H1 (cell line): ENCODE measurements at regions of chr3 and their contacts with region 1.

Region 1: GRCh38 chr3:155418407-155418806 is 124.9 kb upstream of the STRIT1 start:
- DNase-seq: no peak
- H3K4me3 ChIP-seq: no peak overlapping the region
- H3K27ac ChIP-seq: no peak overlapping the region
- H3K4me1 ChIP-seq: peaks cover 0 to 12% (median 8%) of the 10 kb centered on the region in 4 experiments; a peak in 4 of 7 replicates
- H3K27me3 ChIP-seq: no peaks in the 10 kb centered on the region
- CTCF ChIP-seq: no peak
- EP300 ChIP-seq: no peak
- POLR2A ChIP-seq: no peak
- RAD21 ChIP-seq: no peak

Region 2: DNA sequence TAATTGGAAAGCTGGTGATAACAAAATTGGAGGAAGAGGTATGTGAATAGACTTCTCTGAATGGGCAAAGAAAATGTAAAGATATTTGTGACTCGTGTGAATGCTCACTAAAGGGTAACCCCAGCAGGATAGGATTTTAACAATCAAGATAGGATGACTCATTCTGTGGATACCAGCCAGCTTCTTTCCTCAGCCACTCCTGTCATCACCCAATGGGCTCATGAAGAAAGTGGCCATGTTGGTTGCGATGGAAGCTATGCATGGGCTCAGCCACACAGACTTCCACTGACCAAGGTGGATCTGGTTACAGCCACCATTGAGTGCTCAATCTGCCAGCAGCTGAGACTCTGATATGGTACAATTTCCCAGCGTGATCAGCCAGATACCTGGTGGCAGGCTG is 165.9 kb before region 1 on chr3:
- CTCF ChIA-PET with region 1: no interaction called
- POLR2A ChIA-PET with region 1: no interaction called
- DNase-seq: no peak
- H3K4me3 ChIP-seq: no peak overlapping the region
- H3K27ac ChIP-seq: no peak overlapping the region
- H3K4me1 ChIP-seq: no peaks in the 10 kb centered on the region
- H3K27me3 ChIP-seq: no peaks in the 10 kb centered on the region
- CTCF ChIP-seq: no peak
- EP300 ChIP-seq: no peak
- POLR2A ChIP-seq: no peak
- RAD21 ChIP-seq: no peak

Region 3: GRCh38 chr3:155431856-155432570 is 13.6 kb after region 1 on chr3:
- CTCF ChIA-PET with region 1: interaction called, 10 read pairs
- POLR2A ChIA-PET with region 1: interaction called, 3 read pairs
- DNase-seq: no peak
- H3K4me3 ChIP-seq: no peak overlapping the region
- H3K27ac ChIP-seq: no peak overlapping the region
- H3K4me1 ChIP-seq: peaks cover 0 to 1% (median 0%) of the 10 kb centered on the region in 4 experiments; a peak in 1 of 7 replicates
- H3K27me3 ChIP-seq: no peaks in the 10 kb centered on the region
- CTCF ChIP-seq: no peak
- EP300 ChIP-seq: no peak
- POLR2A ChIP-seq: no peak
- RAD21 ChIP-seq: no peak

Region 4: GRCh38 chr3:155535098-155535497 is 116.7 kb after region 1 on chr3:
- CTCF ChIA-PET with region 1: no interaction called
- POLR2A ChIA-PET with region 1: no interaction called
- DNase-seq: no peak
- H3K4me3 ChIP-seq: no peak overlapping the region
- H3K27ac ChIP-seq: no peak overlapping the region
- H3K4me1 ChIP-seq: no peaks in the 10 kb centered on the region
- H3K27me3 ChIP-seq: no peaks in the 10 kb centered on the region
- CTCF ChIP-seq: no peak
- EP300 ChIP-seq: no peak
- POLR2A ChIP-seq: no peak
- RAD21 ChIP-seq: no peak